GM10248 (cell line): ENCODE measurements at regions of chr6 and their contacts with region 1.

Region 1: GRCh38 chr6:30541515-30542403 is 14.5 kb downstream of the GNL1 start:
- DNase-seq: peak; percentile 74
- CTCF ChIP-seq: peak; percentile 100

Region 2: GRCh38 chr6:29907637-29908340 is 634.0 kb before region 1 on chr6:
- CTCF ChIA-PET with region 1: no interaction called
- POLR2A ChIA-PET with region 1: no interaction called
- DNase-seq: no peak
- CTCF ChIP-seq: no peak

Region 3: DNA sequence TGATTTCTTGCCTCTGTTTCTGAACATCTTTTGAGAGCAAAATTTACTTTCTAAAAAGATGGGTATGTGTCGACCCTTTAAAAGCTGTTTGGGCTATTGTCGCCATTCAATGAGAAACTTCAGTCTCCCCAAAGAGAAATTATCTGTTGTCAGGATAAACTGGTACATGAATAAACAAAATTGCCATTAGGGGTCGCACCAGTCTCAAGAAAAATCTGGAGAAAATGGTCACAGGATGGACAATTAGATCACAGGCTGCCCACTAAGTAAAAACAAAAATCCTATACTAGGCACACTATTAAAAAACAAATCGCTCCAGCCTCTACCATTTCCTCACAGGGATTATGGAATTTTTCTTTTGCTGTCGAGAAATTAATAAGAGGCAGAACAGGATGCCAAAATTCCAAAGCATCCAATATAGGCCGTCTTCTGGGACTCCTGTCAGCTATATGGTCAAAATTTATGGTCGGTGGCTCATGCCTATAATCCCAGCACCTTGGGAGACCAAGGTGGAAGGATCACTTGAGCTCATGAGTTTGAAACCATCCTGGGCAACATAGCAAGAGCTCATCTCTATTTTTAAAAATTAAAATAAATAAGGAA is 58.0 kb before region 1 on chr6:
- CTCF ChIA-PET with region 1: interaction called, 278 read pairs
- POLR2A ChIA-PET with region 1: no interaction called
- DNase-seq: peak; percentile 55
- CTCF ChIP-seq: peak; percentile 70

Region 4: DNA sequence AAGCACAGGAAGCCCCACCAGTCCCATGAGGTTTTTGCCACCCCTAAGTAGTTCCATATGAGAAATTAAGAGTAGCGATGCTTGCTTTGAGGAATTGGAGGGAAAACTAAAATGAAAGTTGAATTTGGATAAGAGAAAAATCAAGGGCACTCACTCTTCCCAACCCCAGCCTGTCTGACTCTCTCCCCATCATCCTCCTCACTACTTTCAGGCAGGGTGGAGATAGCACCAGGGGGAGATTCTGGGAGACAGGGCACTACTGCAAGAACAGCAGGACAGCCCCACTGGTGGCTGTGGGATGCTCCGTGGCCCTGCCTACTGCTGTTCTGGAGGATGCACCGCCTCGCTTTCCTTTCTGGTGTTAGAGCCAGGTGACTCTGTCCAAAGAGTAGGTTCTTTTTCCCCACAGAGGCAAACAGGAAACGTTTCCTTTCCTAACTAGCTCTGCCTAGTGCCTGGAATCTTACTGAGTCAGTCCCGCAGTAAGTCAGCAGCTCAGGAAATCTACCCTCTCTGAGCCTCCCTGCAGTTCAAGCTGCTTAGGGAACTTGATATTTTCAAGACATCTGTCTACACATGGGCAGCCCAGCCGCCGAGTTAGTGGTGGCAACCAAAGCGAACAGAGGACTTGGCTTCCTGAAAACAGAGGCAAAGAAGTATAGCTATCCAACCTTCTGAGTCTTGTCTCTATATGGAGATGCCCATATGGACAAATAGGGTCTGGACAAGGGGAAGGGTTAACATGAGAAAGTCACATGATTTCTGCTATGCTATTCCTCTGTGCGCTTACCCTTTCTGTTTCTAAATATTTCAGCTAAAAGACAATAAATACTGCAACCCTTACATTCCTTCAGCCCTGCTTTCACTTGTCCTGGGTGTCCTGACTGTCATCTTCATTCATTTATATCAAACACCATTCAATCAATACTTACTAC is 41.1 kb before region 1 on chr6:
- CTCF ChIA-PET with region 1: interaction called, 49 read pairs
- POLR2A ChIA-PET with region 1: no interaction called
- DNase-seq: no peak
- CTCF ChIP-seq: no peak

Region 5: DNA sequence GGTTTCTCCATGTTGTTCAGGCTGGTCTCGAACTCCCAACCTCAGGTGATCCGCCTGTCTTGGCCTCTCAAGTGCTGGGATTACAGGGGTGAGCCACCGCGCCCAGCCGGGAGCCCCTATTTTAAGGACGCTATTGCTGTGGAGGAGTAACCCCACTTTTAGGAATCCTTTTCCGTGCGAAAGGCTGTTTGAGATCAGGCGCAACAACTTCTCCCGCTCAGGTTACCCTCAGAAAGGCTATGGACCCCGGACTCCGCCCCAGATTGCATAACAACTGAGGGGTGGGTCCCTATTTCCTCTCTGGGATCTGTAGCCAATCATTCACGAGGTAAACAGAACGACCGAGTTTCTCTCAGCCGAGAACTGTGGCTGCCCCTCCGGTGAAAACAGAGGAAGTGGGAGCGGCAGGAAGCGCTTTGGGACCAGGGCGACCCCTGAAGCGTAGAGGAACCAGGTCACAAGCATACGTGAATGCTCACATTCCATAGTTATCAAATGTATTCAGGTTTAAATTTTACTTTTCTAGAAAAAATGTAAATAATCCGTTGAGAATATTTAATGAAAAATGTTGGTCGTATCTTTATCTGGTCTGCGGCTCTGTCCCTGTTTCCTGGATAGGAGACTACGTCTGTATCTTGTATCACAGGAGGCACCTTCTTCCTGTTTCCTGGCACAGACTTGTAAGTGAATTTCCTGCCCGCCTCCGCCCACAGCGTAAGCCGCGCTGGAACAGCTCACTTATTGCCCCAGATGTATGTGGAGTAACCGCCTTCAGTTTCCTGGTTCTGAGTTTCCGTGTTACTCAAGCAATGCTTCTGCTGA is 25.6 kb before region 1 on chr6:
- CTCF ChIA-PET with region 1: interaction called, 27 read pairs
- POLR2A ChIA-PET with region 1: interaction called, 6 read pairs
- DNase-seq: peak; percentile 78
- CTCF ChIP-seq: no peak

Region 6: GRCh38 chr6:30565772-30566171 is 24.0 kb after region 1 on chr6:
- CTCF ChIA-PET with region 1: interaction called, 31 read pairs
- POLR2A ChIA-PET with region 1: no interaction called
- DNase-seq: no peak
- CTCF ChIP-seq: no peak

Region 7: DNA sequence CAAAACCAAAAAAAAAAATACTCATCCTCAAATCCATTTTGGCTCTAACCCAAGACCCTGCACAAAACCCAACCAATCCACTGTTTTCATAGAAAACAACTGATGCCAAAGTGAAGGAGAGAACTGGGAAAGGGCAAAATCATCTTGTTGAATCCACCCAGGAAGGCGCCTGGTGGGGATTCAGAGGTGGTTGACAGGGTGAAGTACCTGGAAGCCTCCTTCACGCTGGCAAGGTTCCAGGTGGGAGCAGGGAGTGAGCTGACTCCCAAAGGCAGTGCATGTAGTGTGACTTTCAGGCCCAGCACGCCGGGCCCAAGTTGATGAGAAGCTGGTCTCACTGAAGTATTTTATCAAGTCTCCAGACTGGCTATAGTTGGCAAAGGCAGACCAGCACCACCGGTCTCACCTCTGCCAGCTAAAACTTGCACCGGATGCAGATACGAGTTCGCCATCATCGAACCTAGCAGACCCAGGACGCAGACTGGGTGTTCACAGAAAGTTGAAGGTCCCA is 58.7 kb after region 1 on chr6:
- CTCF ChIA-PET with region 1: interaction called, 93 read pairs
- POLR2A ChIA-PET with region 1: no interaction called
- DNase-seq: no peak
- CTCF ChIP-seq: no peak

Region 8: DNA sequence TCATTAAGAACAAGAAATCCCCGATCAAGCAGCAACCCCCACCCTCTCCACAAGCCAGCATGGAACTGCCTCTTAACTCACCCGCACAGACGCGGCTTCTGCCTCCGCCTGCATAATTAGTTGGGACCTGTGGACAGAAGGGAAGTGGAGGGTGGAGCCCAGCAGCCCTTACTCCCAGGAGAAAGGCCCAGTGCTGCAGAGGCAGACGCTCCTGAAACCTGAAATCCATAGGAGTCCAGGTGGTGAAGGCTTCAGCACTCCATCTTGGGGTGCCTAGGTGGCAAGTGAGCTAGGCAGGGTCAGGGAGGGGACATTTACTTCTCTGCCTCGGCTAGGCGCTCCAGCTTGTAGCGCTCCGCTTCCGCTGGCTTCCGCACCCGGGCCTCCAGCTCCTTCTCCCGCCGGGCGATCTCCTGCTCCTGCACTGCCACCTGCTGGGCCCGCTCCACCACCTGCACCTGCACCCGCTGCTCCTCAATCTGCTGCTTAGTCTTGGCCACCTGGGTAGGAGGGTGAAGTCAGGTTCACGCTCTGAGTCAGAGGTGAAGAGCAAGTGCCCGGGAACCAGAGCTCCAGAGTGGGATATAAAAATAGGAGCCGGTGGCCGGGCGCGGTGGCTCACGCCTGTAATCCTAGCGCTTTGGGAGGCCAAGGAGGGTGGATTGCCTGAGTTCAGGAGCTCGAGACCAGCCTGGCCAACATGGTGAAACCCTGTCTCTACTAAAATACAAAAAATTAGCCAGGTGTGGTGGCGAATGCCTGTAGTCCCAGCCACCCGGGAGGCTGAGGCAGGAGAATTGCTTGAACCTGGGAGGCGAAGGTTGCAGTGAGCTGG is 189.1 kb after region 1 on chr6:
- CTCF ChIA-PET with region 1: interaction called, 18 read pairs
- POLR2A ChIA-PET with region 1: no interaction called
- DNase-seq: peak; percentile 78
- CTCF ChIP-seq: peak; percentile 98